ENCODE measurements at regions of chr4 and their contacts with region 1.

Region 1: GRCh38 chr4:22389240-22389870 is 126.5 kb downstream of the ADGRA3 start:
- DNase-seq: peak in 4 of 5 donors; percentile 13 to 39 (median 28)
- ATAC-seq: peak in 3 of 4 donors; percentile 45 to 58 (median 56)
- H3K4me3 ChIP-seq: no peak overlapping the region
- H3K27ac ChIP-seq: no peak overlapping the region
- H3K4me1 ChIP-seq: no peaks in the 10 kb centered on the region
- H3K27me3 ChIP-seq: no peaks in the 10 kb centered on the region
- CTCF ChIP-seq: peak; percentile 52 to 81 (median 70)
- POLR2A ChIP-seq: no peak

Region 2: DNA sequence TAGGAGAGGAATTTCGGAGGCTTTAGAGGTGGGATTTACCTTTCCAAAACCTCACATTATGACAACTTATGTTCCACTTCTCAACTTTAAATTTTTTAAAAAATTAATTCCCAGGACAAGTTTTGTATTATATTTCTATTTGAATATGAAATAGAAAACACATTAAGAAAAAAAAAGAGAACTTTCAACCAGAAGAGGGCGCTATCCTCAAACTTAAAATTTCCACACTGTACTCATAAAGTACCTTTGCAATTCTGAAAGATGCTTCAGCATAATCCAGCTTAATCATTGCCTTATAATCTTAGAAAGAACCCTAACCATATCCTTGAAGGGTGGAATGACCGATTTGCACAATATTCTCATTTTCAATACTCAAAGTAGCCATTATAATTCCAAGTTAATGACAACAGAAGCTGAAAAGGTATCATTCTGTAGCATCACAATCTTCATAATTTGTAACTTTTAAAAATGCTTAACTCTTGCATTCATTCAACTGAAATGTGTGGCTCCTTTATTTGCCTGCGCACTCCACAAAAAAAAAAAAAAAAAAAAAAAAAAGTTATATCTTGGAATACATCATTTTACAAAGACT is 598.8 kb before region 1 on chr4:
- intact Hi-C with region 1: loop called (anchors 1 to 5 kb)
- DNase-seq: no peak
- ATAC-seq: no peak
- H3K4me3 ChIP-seq: no peak overlapping the region
- H3K27ac ChIP-seq: no peak overlapping the region
- H3K4me1 ChIP-seq: no peaks in the 10 kb centered on the region
- H3K27me3 ChIP-seq: no peaks in the 10 kb centered on the region
- CTCF ChIP-seq: peak; percentile 32 to 62 (median 50)
- POLR2A ChIP-seq: no peak

Region 3: GRCh38 chr4:22129454-22130029 is 259.8 kb before region 1 on chr4:
- intact Hi-C with region 1: loop called in 1 of 10 experiments (anchors 10 kb)
- DNase-seq: no peak
- ATAC-seq: no peak
- H3K4me3 ChIP-seq: no peak overlapping the region
- H3K27ac ChIP-seq: no peak overlapping the region
- H3K4me1 ChIP-seq: no peaks in the 10 kb centered on the region
- H3K27me3 ChIP-seq: no peaks in the 10 kb centered on the region
- CTCF ChIP-seq: peak in 9 of 12 donors; percentile 22 to 47 (median 27)
- POLR2A ChIP-seq: no peak

Measured in heart left ventricle (tissue), 16 donors.